ENCODE measurements at regions of chr14 and their contacts with region 1.

Region 1: GRCh38 chr14:64986578-64987571 is at the start of gene FNTB:
- DNase-seq: peak; percentile 91 to 99 (median 95)

Region 2: GRCh38 chr14:64823305-64823861 is 163.5 kb before region 1 on chr14:
- intact Hi-C with region 1: loop called (anchors 1 kb)
- DNase-seq: peak; percentile 52 to 96 (median 78)

Region 3: DNA sequence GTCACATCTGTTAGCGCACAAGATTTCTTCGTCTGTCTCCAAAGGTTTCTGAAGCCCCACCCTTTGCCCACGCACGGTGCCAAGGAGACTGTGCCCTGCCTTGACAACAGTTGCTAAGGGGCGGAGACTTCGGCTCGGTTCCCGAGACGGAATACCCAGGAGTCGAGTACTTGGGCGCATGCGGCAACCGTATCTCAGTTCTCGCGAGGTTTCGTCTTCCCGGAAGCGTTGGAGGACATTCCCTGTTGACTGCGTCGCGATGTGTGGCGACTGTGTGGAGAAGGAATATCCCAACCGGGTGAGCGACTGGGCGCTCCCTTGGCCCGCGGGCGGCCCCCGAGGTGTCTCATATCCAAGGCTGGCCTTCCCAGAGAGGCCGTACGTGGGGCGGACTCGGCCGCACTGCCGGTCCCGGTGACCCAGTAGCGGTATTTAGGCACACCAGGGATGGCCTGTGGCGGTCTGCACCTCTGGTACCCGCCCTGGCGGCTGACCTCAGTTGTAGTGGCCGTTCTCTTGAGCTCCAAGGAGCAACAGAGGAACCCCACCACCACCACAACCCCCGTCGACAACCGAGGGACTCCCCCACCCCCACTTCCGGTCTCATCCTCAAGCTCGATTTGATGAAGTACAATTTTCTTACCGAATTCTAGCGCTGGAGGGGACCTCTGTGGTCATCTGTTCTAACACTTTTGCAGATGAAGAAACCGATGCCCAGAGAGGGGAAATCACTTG is 72.5 kb before region 1 on chr14 and contains the start of gene CHURC1:
- intact Hi-C with region 1: loop called (anchors 2 kb)
- DNase-seq: peak; percentile 93 to 99 (median 98)

Region 4: GRCh38 chr14:65019944-65020566 is 33.2 kb after region 1 on chr14:
- intact Hi-C with region 1: loop called (anchors 1 kb)
- DNase-seq: peak in 4 of 10 donors; percentile 26 to 87 (median 41)

Region 5: DNA sequence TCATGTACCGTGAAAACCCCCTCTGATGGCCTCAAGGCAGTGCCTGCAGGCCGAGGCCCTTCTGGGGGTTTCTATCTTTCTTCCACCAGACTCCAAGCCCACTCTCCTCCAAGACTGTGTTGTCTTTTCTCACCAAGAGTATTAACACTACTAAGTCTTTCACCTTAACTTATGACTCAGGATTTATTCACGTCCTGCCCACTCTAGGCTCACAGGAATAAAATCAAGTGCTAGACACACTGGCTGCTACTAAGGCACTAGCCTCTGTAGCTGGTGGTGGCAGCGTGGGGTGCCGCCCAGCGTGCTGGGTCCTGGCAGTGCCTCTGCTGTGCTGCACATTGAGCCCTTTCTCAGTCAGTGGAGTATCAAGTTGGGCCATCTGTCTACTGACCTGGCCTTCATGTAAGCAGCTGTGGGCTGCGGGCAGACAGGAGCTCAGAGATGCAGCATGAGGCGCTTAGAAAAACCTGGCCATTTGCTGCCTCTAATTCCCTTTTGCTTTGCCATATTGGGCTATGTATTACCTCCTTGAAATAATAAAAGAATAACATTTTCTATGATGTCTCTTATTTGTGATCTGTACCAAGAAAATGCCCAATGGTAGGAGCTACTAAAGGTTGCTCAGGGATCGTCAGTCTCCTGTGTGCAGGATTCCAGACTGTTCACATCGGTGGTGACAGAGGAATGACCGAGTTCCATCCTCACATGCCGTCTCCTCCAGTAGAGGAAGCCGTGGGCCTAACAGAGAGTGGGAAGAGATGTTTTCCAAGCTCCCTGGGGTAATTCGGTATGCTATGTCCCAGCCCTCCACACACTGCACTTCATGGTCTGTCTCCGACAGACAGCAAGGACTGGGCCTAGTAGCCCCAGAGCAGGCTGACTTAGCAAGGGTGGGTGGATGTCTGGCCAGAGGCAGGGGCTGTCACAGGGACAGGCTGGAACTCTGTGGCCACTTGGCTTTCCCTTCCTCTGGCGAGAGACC is 75.5 kb after region 1 on chr14:
- intact Hi-C with region 1: no loop called
- DNase-seq: no peak

Region 6: GRCh38 chr14:65102441-65103149 is 115.7 kb after region 1 on chr14 and contains the start of gene MAX:
- intact Hi-C with region 1: loop called (anchors 2 kb)
- DNase-seq: peak; percentile 98 to 100 (median 99)